ENCODE measurements at regions of chr17 and their contacts with region 1.

Region 1: DNA sequence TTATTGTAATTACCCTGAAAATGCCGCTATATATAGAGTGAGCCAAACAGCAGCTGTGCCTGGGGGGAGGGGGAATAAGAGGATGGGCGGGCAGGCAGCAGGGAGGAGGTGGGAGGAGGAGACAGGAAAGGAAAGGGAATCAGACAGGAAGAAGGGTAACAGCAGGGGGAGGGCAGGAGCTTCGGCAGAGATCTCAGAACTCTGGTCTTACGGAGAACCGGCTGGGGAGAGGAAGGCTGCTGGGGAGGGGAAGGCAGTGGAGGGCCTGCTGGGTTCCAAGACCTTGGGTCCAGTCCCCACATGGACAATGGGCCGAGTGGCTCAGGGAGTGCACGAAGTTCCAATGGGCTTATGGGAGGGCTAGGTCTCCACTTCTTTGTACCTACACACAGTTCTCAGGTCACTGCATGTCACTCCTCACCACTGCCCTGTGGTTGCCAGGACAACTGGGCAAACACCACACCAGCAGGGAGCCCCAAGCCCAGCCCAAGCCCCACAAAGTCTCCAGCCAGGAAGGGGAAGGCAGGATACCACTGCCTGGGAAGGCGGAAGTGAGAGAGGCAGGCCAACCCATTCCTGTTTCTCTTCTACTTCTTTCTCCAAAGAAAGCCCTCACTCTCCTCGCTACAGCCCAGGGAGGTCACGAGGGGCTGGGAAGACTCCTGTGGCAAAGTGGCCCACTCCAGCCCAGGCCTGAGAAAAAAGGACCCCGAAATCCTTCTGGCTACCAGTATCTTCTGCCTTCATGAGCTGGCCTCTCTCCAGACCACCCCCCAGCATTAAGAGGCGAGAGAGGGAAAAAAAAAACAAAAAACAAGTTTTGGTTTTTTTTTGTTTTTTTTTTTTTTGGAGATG is 25.3 kb downstream of the G6PC3 start:
- DNase-seq: peak; percentile 93
- ATAC-seq: peak; percentile 98
- H3K4me3 ChIP-seq: peak overlapping the region; percentile 27; the same call in 1 of the 2 replicates
- H3K27ac ChIP-seq: peak overlapping the region; percentile 87
- H3K4me1 ChIP-seq: peaks cover 16% of the 10 kb centered on the region
- H3K27me3 ChIP-seq: no peaks in the 10 kb centered on the region
- CTCF ChIP-seq: peak; percentile 39
- POLR2A ChIP-seq: peak; percentile 80
- RAD21 ChIP-seq: peak; percentile 44

Region 2: GRCh38 chr17:44053125-44053872 is 42.6 kb before region 1 on chr17:
- CTCF ChIA-PET with region 1: no interaction called
- POLR2A ChIA-PET with region 1: no interaction called
- dilution Hi-C with region 1: no loop called
- in situ Hi-C with region 1: no loop called
- intact Hi-C with region 1: no loop called
- DNase-seq: no peak
- ATAC-seq: no peak
- H3K4me3 ChIP-seq: no peak overlapping the region
- H3K27ac ChIP-seq: no peak overlapping the region
- H3K4me1 ChIP-seq: peaks cover 2% of the 10 kb centered on the region; the same call in 1 of the 2 replicates
- H3K27me3 ChIP-seq: no peaks in the 10 kb centered on the region
- CTCF ChIP-seq: no peak
- POLR2A ChIP-seq: no peak
- RAD21 ChIP-seq: no peak

Region 3: GRCh38 chr17:44070455-44071197 is 25.2 kb before region 1 on chr17 and contains the start of gene G6PC3:
- CTCF ChIA-PET with region 1: no interaction called
- POLR2A ChIA-PET with region 1: no interaction called
- dilution Hi-C with region 1: no loop called
- in situ Hi-C with region 1: no loop called
- intact Hi-C with region 1: loop called (anchors 1 kb)
- DNase-seq: peak; percentile 98
- ATAC-seq: peak; percentile 88
- H3K4me3 ChIP-seq: peak within 1 kb of the TSS; percentile 56
- H3K27ac ChIP-seq: peak within 1 kb of the TSS; percentile 91
- H3K4me1 ChIP-seq: peaks cover 9% of the 10 kb centered on the region
- H3K27me3 ChIP-seq: no peaks in the 10 kb centered on the region
- CTCF ChIP-seq: 0 out of 2 replicates have a peak, but pooled peaks have one; percentile 11
- POLR2A ChIP-seq: peak; percentile 94
- RAD21 ChIP-seq: peak; percentile 26
- total RNA-seq, gene G6PC3: 19.4 and 20.4 TPM in 2 replicates

Region 4: DNA sequence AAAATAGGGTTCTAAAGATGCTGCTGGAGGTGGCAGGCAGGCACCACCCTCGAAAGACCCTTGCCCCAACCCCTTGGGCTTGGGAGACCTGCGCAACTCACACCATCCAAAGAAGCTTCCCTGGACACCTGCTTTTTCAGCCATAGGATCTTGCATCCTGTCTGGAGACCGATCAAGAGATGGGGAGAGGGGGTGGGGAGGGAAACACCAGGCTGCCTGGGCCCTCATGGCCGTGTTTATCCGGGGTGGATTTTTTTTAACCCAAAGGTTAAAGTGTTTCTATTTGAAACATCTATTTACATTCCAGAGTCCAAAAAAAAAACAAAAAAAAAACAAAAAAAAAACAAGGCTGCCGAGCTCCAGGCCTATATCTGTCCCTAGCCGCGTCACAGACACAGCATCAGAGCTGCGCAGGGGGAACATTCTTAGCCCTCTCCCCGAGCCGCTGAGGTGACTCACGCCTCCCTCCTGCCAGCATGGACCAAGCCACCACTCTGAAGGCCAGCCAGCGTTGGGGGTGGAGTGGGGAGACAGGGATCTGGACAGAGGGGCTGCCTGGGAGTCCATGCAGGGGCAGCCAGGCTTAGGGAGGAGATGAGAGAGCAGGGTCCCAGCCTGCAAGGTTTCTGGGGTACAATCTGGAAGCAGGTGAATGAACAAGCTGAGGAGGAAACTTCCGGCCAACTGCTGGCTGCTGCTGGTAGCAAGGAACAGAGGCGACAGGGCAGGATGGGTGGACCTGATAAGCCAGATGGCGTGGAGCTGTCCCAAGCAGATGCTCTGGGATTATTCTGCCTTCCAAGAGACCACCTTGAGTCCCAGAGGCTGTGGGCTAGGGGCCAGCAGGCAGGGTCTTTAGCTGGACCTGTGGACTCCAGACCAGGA is 12.8 kb after region 1 on chr17:
- CTCF ChIA-PET with region 1: no interaction called
- POLR2A ChIA-PET with region 1: interaction called, 3 read pairs
- dilution Hi-C with region 1: no loop called
- in situ Hi-C with region 1: no loop called
- intact Hi-C with region 1: loop called (anchors 1 kb)
- DNase-seq: peak; percentile 98
- ATAC-seq: peak; percentile 90
- H3K4me3 ChIP-seq: no peak overlapping the region
- H3K27ac ChIP-seq: peak overlapping the region; percentile 84
- H3K4me1 ChIP-seq: peaks cover 47% of the 10 kb centered on the region
- H3K27me3 ChIP-seq: no peaks in the 10 kb centered on the region
- CTCF ChIP-seq: no peak
- POLR2A ChIP-seq: peak; percentile 49
- RAD21 ChIP-seq: no peak; the same call in 1 of the 2 replicates

Measured in IMR-90 (cell line).